Posterior vena cava (tissue), 2 donors: ENCODE measurements at regions of chr15 and their contacts with region 1.

Region 1: DNA sequence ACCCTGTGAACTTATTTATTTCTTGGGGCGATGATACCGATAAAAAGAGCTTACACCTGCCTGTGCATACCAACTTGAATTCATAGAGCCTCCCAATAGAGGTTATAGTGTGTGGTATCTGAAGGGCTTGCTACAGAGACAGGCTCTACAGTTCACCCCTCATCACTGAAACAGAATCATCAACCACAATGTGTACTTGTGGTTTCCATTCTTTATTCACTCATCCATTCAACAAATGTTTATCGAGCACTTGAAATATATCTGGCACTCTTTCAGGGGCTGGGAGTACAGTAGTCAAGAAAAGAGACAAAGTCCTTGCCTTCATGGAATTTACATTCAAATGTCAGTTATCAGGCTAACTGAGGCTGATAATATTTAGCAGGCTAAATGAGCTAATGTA is 134.4 kb upstream of the SKOR1 start:
- DNase-seq: no peak

Region 2: GRCh38 chr15:66919421-66919820 is 771.5 kb before region 1 on chr15:
- intact Hi-C with region 1: loop called in 1 of 2 experiments (anchors 5 kb)
- DNase-seq: peak; percentile 24